ENCODE measurements at regions of chr13 and their contacts with region 1.

Region 1: GRCh38 chr13:24683838-24684599 is 3.8 kb downstream of the ATP12A start:
- DNase-seq: peak; percentile 37
- ATAC-seq: peak; percentile 93
- H3K4me3 Mint-ChIP-seq: no peak overlapping the region
- H3K27ac Mint-ChIP-seq: no peak overlapping the region
- H3K4me1 Mint-ChIP-seq: peaks cover 19% of the 10 kb centered on the region
- H3K27me3 Mint-ChIP-seq: peaks cover 34% of the 10 kb centered on the region
- CTCF ChIP-seq: peak; percentile 68

Region 2: DNA sequence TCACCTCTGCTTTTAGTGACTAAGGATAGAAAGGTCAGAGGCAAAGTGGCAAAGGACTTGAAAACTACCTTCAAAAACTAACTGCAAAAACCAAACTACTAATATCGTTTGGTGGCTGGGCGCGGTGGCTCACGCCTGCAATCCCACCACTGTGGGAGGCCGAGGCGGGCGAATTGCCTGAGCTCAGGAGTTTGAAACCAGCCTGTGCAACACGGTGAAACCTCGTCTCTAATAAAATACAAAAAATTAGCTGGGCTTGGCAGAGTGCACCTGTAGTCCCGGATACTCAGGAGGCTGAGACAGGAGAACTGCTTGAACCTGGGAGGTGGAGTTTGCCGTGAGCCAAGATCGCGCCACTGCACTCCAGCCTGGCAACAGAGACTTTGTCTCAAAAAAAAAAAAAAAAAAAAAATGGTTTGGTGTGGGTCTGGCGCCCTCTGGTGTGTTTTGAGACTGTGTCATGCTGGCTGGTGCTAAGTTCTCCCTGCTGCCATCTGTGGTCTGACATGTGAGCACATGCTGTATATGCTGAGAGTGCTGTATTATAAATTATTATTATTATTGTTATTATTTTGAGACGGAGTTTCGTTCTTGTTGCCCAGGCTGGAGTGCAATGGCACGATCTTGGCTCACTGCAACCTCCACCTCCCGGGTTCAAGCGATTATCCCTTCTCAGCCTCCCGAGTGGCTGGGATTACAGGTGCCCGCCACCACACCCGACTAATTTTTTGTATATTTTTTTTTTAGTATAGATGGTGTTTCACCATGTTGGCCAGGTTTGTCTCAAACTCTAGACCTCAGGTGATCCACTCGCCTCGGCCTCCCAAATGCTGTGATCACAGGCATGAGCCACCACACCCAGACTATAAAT is 43.9 kb after region 1 on chr13:
- CTCF ChIA-PET with region 1: no interaction called
- POLR2A ChIA-PET with region 1: no interaction called
- intact Hi-C with region 1: loop called (anchors 2 kb)
- DNase-seq: no peak
- ATAC-seq: peak; percentile 88
- H3K4me3 Mint-ChIP-seq: no peak overlapping the region
- H3K27ac Mint-ChIP-seq: no peak overlapping the region
- H3K4me1 Mint-ChIP-seq: peaks cover 7% of the 10 kb centered on the region
- H3K27me3 Mint-ChIP-seq: peaks cover 3% of the 10 kb centered on the region
- CTCF ChIP-seq: no peak

Region 3: DNA sequence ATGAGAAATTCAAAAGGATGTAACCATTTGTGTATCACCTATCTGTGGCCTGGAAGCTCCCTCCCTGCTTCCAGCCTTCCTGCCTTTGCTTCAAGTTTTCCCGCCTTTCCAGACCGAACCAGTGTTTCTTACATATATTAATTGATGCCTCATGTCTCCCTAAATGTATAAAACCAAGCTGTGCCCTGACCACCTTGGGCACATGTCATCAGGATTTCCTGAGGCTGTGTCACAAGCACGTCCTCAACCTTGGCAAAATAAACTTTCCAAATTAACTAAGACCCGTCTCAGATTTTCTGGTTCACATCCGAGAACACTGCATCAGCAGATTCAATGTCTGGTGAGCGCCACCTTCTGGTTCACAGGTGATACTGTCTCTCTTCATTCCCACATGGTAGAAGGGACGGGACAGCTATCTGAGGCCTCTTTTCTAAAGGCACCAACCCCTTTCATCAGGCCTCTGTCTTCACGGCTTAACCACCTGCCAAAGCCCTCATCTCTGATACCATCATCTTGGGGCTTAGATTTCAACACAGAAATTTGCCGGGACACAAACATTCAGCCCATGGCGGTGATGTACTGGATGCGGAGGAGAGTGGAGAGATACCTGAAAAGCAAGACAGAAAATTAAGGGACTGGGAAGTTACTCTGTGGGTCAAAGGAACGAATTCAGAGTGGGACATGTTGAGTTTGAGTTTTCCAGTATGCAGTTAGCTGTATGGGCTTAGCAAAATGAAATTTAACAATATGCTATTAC is 353.2 kb after region 1 on chr13:
- CTCF ChIA-PET with region 1: no interaction called
- POLR2A ChIA-PET with region 1: no interaction called
- intact Hi-C with region 1: loop called (anchors 5 kb)
- DNase-seq: no peak
- ATAC-seq: peak; percentile 82
- H3K4me3 Mint-ChIP-seq: no peak overlapping the region
- H3K27ac Mint-ChIP-seq: no peak overlapping the region
- H3K4me1 Mint-ChIP-seq: peaks cover 3% of the 10 kb centered on the region
- H3K27me3 Mint-ChIP-seq: peaks cover 46% of the 10 kb centered on the region
- CTCF ChIP-seq: peak; percentile 24